ENCODE measurements at regions of chr1 and their contacts with region 1.

Region 1: GRCh38 chr1:161749509-161750407 is at the start of gene DUSP12:
- DNase-seq: peak; percentile 88 to 97
- H3K4me3 ChIP-seq: peak within 1 kb of the TSS; percentile 94
- H3K4me1 ChIP-seq: peaks cover 9% of the 10 kb centered on the region
- H3K27me3 ChIP-seq: no peaks in the 10 kb centered on the region; the same call in 1 of the 2 replicates

Region 2: GRCh38 chr1:161177112-161177935 is 572.4 kb before region 1 on chr1 and contains the start of gene B4GALT3:
- in situ Hi-C with region 1: loop called (anchors 25 kb)
- DNase-seq: peak; percentile 56 to 95
- H3K4me3 ChIP-seq: peak within 1 kb of the TSS; percentile 76
- H3K4me1 ChIP-seq: peaks cover 14% of the 10 kb centered on the region
- H3K27me3 ChIP-seq: no peaks in the 10 kb centered on the region

Region 3: DNA sequence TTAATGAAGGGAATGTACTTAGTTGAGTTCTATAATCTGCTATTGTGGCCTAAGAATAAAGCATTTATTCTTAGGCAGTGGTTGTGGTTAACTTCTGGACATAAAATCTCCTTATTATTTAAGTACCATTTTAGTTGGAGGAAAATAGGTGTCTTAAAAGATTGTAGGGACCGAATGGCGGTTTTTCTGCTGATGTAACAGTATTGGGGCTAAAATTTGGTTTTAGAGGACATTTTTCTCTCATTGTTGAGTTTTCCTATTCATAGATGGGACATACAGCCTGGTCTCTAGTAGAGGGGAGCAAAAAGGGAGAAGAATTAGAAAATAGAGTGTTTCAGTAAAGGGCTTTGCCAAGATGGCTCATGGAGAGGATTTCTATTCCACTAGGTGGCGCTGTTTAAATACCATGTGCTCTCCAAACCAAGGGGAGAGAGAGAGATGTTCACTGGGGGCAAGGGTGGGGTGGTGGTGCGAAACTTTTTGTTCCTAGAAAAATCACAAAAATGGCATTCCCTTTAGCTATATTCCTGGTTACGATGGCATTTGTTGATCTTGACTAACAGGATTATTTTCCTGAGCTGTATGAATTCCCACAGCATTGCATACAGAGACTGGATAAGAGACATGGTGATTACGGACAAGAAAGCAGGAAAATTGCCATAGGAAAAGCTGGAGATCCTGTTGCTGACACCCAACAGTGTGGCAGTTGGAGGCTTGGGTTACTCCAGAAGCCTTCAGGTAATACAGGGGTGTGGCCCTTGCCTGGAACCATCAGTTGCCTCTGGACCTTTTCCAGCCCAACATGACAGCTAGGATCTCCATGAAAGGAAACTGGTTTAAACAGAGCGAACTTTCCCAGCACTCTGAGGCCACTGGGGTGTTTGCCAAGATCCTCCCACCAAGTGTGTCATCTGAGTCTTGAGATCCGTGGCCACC is 262.7 kb before region 1 on chr1:
- in situ Hi-C with region 1: loop called (anchors 10 kb)
- DNase-seq: peak; percentile 44 to 56
- H3K4me3 ChIP-seq: no peak overlapping the region
- H3K4me1 ChIP-seq: peaks cover 4% of the 10 kb centered on the region
- H3K27me3 ChIP-seq: peaks cover 23% of the 10 kb centered on the region

Measured in HAP-1 (cell line).